ENCODE measurements at regions of chr1 and their contacts with region 1.

Region 1: GRCh38 chr1:166166695-166167571 is at the start of gene FAM78B:
- DNase-seq: peak; percentile 48 to 73 (median 60)
- H3K4me3 ChIP-seq: peak within 1 kb of the TSS; percentile 53 to 82 (median 72)
- H3K27ac ChIP-seq: peak within 1 kb of the TSS in 45 of 59 donors; percentile 15 to 82 (median 60)
- H3K27me3 ChIP-seq: peaks cover 0 to 3% (median 0%) of the 10 kb centered on the region in 45 donors
- CTCF ChIP-seq: peak in 13 of 56 donors; percentile 4 to 38 (median 14)
- total RNA-seq, gene FAM78B: 4.2 to 30.5 (median 19.3) TPM

Region 2: GRCh38 chr1:165933446-165934178 is 233.3 kb before region 1 on chr1:
- intact Hi-C with region 1: loop called (anchors 5 to 10 kb)
- DNase-seq: no peak
- H3K4me3 ChIP-seq: no peak overlapping the region
- H3K27ac ChIP-seq: no peak overlapping the region
- H3K27me3 ChIP-seq: no peaks in the 10 kb centered on the region
- CTCF ChIP-seq: no peak

Measured in dorsolateral prefrontal cortex (tissue), 120 donors.